WTC11 (cell line): ENCODE measurements at regions of chr11 and their contacts with region 1.

Region 1: DNA sequence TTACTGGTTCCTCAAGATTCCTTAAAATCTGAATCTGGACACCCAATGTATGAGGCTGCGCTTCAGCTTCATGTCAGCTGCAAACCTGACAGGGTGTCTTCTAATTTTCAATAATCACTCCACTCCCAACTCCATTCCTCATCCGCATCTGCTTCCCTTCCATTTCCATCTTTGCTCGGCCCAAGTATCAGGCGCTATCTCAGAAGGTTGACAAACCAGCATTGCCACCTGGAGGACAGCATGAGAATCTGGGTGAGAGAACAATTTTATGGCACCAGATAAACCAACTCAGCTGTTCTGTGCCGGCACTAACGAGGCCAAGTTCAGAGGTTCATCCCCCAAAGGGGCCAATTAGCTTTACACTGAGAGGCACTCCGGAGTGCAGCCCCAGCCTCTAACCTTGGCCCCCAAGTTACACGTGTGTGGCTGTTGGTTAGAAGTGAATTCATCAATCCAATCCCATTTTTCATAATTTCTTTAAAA is 79.1 kb upstream of the LMO2 start:
- DNase-seq: peak; percentile 41
- ATAC-seq: peak; percentile 91
- H3K4me3 Mint-ChIP-seq: no peak overlapping the region
- H3K27ac Mint-ChIP-seq: no peak overlapping the region
- H3K4me1 Mint-ChIP-seq: 0 out of 2 replicates have a peak, but pooled peaks cover 2% of the 10 kb centered on the region
- H3K27me3 Mint-ChIP-seq: peaks cover 3% of the 10 kb centered on the region; the same call in 1 of the 2 replicates
- CTCF ChIP-seq: peak; percentile 28; the same call in 1 of the 2 replicates

Region 2: DNA sequence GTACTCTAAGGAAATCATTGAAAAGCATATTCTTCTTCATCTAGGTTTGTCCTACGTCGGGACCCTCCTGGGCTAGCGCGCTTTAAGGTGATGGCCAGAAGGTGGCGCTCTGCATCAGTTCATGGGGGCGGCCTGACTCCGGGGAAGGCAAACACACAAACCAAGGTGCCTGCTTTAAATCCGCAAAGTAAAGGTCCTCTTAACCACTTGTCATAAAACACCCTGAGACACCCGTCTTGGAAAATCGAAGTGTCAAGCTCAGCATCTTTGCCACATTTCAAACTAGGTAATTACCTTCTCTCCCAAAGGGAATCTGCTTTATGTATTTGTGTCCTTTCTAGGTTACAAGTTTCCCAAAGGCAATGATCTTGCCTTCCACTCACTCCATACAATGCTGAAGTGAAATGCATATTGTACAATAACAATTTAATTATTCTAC is 113.1 kb before region 1 on chr11:
- CTCF ChIA-PET with region 1: interaction called, 13 read pairs
- POLR2A ChIA-PET with region 1: no interaction called
- DNase-seq: peak; percentile 86
- ATAC-seq: peak; percentile 92
- H3K4me3 Mint-ChIP-seq: no peak overlapping the region
- H3K27ac Mint-ChIP-seq: no peak overlapping the region
- H3K4me1 Mint-ChIP-seq: peaks cover 13% of the 10 kb centered on the region
- H3K27me3 Mint-ChIP-seq: no peaks in the 10 kb centered on the region; the same call in 1 of the 2 replicates
- CTCF ChIP-seq: peak; percentile 92